ENCODE measurements at regions of chr20 and their contacts with region 1.

Region 1: DNA sequence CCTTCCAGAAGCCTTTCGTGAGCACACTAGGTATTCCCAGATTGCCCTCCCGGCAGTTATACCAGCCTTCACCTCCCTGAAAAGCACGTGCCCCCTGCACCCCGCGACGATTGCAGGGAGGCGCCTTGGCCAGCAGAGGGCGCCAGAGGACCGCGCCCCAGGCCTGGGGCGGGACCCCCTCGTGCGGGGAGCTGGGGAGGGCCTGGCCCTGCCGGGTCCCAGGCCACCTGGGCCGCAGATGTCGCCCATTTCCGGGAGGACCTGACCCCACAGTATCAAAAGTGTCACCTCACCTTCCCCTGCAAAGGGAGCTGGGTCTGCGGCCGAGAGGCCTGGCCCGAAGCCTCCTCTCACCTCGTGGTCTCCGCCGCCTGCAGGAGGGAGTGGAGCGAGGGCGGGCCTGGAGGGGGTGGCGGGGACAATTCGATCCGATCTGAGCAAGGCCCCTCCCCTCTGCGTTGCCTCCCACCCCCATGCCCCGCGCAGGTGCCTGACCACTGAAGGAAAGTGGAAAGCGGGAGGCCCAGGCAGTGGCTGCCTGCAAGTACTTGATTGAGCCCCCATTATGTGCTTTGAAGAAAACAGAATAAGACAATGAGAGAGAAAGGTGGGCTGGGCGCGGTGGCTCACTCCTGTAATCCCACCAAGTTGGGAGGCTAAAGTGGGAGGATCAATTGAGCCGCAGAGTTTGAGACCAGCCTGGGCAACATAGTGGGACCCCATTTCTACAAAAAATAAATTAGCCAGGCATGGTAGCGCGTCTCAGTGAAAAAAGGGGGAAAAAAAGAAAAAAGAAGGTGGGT is 3.5 kb upstream of the SNAI1 start:
- DNase-seq: peak; percentile 47 to 62 (median 52)
- H3K4me3 ChIP-seq: peak overlapping the region in 1 of 3 experiments; percentile 56
- H3K4me3 Mint-ChIP-seq: peak overlapping the region; percentile 24 to 51
- H3K27ac ChIP-seq: no peak overlapping the region
- H3K27ac Mint-ChIP-seq: peak overlapping the region in 1 of 7 donors; percentile 79
- H3K4me1 ChIP-seq: peaks cover 23 to 37% of the 10 kb centered on the region in 2 donors
- H3K4me1 Mint-ChIP-seq: peaks cover 33% of the 10 kb centered on the region
- H3K27me3 ChIP-seq: peaks cover 0 to 10% of the 10 kb centered on the region in 2 donors
- H3K27me3 Mint-ChIP-seq: peaks cover 22 to 27% (median 27%) of the 10 kb centered on the region in 3 donors
- CTCF ChIP-seq: peak; percentile 100

Region 2: GRCh38 chr20:50070991-50071888 is 92.0 kb after region 1 on chr20:
- intact Hi-C with region 1: loop called (anchors 1 kb)
- DNase-seq: peak; percentile 83 to 86 (median 84)
- H3K4me3 ChIP-seq: peak overlapping the region in 1 of 3 experiments; percentile 61
- H3K4me3 Mint-ChIP-seq: peak overlapping the region; percentile 43 to 69
- H3K27ac ChIP-seq: peak overlapping the region in 1 of 2 donors; percentile 49
- H3K27ac Mint-ChIP-seq: peak overlapping the region in 4 of 7 donors; percentile 5 to 60 (median 34)
- H3K4me1 ChIP-seq: peaks cover 9 to 10% of the 10 kb centered on the region in 2 donors
- H3K4me1 Mint-ChIP-seq: peaks cover 4% of the 10 kb centered on the region
- H3K27me3 ChIP-seq: no peaks in the 10 kb centered on the region
- H3K27me3 Mint-ChIP-seq: peaks cover 1 to 9% (median 2%) of the 10 kb centered on the region in 3 donors
- CTCF ChIP-seq: peak; percentile 97

Region 3: DNA sequence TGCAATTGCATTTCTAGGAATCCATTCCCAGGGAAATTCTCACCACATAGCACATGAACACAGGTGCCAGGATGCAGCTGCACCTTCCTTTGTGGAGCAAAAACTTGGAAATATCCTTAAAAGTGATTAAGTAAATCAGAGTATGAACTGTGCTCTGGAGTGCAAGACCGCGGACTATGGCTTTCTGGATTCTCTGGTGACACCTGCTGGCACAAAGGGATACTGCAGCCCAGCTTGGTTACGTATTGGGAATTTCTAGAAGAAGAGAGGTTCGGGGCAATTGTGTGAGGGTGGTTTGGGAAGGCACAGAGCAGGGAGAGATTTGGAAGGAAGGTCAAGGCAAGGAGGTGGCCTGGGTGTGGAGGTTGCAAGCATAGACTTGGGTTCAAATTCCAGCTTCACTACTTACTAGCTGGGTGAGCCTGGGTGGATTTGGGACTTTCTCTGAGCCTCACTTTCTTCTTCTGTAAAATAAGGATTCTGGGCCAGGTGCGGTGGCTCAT is 190.1 kb after region 1 on chr20:
- intact Hi-C with region 1: loop called (anchors 5 kb)
- DNase-seq: peak; percentile 69 to 80 (median 78)
- H3K4me3 ChIP-seq: no peak overlapping the region
- H3K4me3 Mint-ChIP-seq: no peak overlapping the region
- H3K27ac ChIP-seq: no peak overlapping the region
- H3K27ac Mint-ChIP-seq: peak overlapping the region in 3 of 7 donors; percentile 1 to 46 (median 32)
- H3K4me1 ChIP-seq: peaks cover 29 to 30% of the 10 kb centered on the region in 2 donors
- H3K4me1 Mint-ChIP-seq: peaks cover 26% of the 10 kb centered on the region
- H3K27me3 ChIP-seq: peaks cover 0 to 10% of the 10 kb centered on the region in 2 donors
- H3K27me3 Mint-ChIP-seq: peaks cover 13 to 17% (median 15%) of the 10 kb centered on the region in 3 donors
- CTCF ChIP-seq: peak; percentile 94

Region 4: GRCh38 chr20:50588034-50588611 is 608.9 kb after region 1 on chr20:
- intact Hi-C with region 1: loop called in 1 of 2 experiments (anchors 10 kb)
- DNase-seq: peak; percentile 42 to 60 (median 57)
- H3K4me3 ChIP-seq: no peak overlapping the region
- H3K4me3 Mint-ChIP-seq: no peak overlapping the region
- H3K27ac ChIP-seq: no peak overlapping the region
- H3K27ac Mint-ChIP-seq: no peak overlapping the region
- H3K4me1 ChIP-seq: no peaks in the 10 kb centered on the region
- H3K4me1 Mint-ChIP-seq: no peaks in the 10 kb centered on the region
- H3K27me3 ChIP-seq: no peaks in the 10 kb centered on the region
- H3K27me3 Mint-ChIP-seq: no peaks in the 10 kb centered on the region
- CTCF ChIP-seq: peak; percentile 94

Measured in CD14-positive monocyte (primary cell).